ENCODE measurements at regions of chr1 and their contacts with region 1.

Region 1: GRCh38 chr1:203320591-203321272 is 15.4 kb downstream of the BTG2 start:
- DNase-seq: peak; percentile 99
- H3K4me3 ChIP-seq: peak overlapping the region; percentile 54
- H3K27ac ChIP-seq: peak overlapping the region; percentile 98
- H3K4me1 ChIP-seq: peaks cover 95% of the 10 kb centered on the region
- CTCF ChIP-seq: peak; percentile 41; the same call in 1 of the 2 replicates

Region 2: GRCh38 chr1:203290261-203291089 is 30.3 kb before region 1 on chr1:
- CTCF ChIA-PET with region 1: interaction called, 6 read pairs
- POLR2A ChIA-PET with region 1: interaction called, 458 read pairs
- intact Hi-C with region 1: loop called (anchors 1 kb)
- DNase-seq: peak; percentile 96
- H3K4me3 ChIP-seq: peak overlapping the region; percentile 63
- H3K27ac ChIP-seq: peak overlapping the region; percentile 99
- H3K4me1 ChIP-seq: peaks cover 99% of the 10 kb centered on the region
- CTCF ChIP-seq: 0 out of 2 replicates have a peak, but pooled peaks have one; percentile 17

Measured in OCI-LY7 (cell line).